ENCODE measurements at regions of chr17 and their contacts with region 1.

Region 1: DNA sequence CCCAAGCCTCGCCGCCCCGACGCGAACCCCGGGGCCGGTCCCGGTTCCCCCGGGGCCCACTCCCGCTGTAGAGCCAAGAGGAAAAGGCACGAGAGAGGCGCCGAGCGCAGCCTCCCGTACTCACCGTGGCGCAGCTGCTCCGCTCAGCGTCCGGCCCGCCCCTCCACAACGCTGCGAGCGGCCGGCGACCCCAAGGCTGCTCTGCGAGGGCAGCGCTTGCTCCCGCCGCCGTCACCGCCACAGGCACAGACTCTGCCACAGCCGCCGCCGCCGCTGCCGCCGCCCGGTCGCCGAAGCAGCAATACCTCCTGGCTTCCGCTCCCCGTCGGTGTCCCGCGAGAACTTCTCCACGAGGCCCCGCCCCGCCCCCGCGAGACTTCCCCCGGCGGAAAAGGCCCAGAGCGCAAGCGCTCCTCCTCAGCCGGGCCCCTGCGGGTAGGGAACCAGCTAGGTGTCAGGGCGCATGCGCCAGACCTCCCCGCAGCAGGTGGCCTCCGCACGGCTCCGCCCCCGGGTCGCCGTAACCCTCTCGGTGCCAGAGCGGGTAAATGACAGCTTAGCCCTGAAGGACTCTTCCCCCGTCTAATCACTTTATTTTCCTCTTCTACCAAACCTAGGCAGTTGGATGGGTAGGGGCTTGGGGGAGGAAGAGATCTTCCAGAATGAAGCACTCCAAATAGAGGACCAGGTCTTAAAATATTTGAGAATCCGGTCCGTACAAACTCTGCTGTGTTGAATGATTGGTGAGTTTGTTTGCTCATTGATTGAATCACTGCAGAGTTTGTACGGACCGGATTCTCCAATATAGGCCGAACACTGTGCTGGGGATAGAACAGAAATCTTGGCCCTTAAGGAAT is at the start of gene GRB2:
- DNase-seq: peak; percentile 99 to 100
- H3K4me3 ChIP-seq: peak within 1 kb of the TSS; percentile 70
- H3K4me3 Mint-ChIP-seq: peak within 1 kb of the TSS; percentile 78
- H3K27ac Mint-ChIP-seq: peak within 1 kb of the TSS; percentile 71
- H3K4me1 ChIP-seq: 0 out of 2 replicates have a peak, but pooled peaks cover 6% of the 10 kb centered on the region
- H3K4me1 Mint-ChIP-seq: peaks cover 12% of the 10 kb centered on the region
- H3K27me3 ChIP-seq: no peaks in the 10 kb centered on the region
- H3K27me3 Mint-ChIP-seq: no peaks in the 10 kb centered on the region
- CTCF ChIP-seq: no peak
- total RNA-seq, gene GRB2: 113 and 115 TPM in 2 replicates

Region 2: GRCh38 chr17:75380315-75380714 is 25.3 kb before region 1 on chr17:
- CTCF ChIA-PET with region 1: interaction called, 3 read pairs
- POLR2A ChIA-PET with region 1: no interaction called
- intact Hi-C with region 1: loop called (anchors 1 kb)
- DNase-seq: no peak
- H3K4me3 ChIP-seq: no peak overlapping the region
- H3K4me3 Mint-ChIP-seq: no peak overlapping the region
- H3K27ac Mint-ChIP-seq: no peak overlapping the region
- H3K4me1 ChIP-seq: peaks cover 19% of the 10 kb centered on the region
- H3K4me1 Mint-ChIP-seq: peaks cover 18% of the 10 kb centered on the region
- H3K27me3 ChIP-seq: no peaks in the 10 kb centered on the region
- H3K27me3 Mint-ChIP-seq: no peaks in the 10 kb centered on the region
- CTCF ChIP-seq: no peak

Region 3: GRCh38 chr17:75904749-75905521 is 499.3 kb after region 1 on chr17 and contains the start of gene MRPL38:
- CTCF ChIA-PET with region 1: no interaction called
- POLR2A ChIA-PET with region 1: no interaction called
- intact Hi-C with region 1: no loop called
- DNase-seq: peak; percentile 97 to 99
- H3K4me3 ChIP-seq: peak within 1 kb of the TSS; percentile 66
- H3K4me3 Mint-ChIP-seq: peak within 1 kb of the TSS; percentile 99
- H3K27ac Mint-ChIP-seq: peak within 1 kb of the TSS; percentile 92
- H3K4me1 ChIP-seq: peaks cover 22% of the 10 kb centered on the region
- H3K4me1 Mint-ChIP-seq: peaks cover 17% of the 10 kb centered on the region
- H3K27me3 ChIP-seq: no peaks in the 10 kb centered on the region
- H3K27me3 Mint-ChIP-seq: no peaks in the 10 kb centered on the region
- CTCF ChIP-seq: peak; percentile 95
- total RNA-seq, gene MRPL38: 157 and 163 TPM in 2 replicates

Measured in Caco-2 (cell line).